CD8-positive, alpha-beta T cell (primary cell): ENCODE measurements at regions of chr2 and their contacts with region 1.

Region 1: DNA sequence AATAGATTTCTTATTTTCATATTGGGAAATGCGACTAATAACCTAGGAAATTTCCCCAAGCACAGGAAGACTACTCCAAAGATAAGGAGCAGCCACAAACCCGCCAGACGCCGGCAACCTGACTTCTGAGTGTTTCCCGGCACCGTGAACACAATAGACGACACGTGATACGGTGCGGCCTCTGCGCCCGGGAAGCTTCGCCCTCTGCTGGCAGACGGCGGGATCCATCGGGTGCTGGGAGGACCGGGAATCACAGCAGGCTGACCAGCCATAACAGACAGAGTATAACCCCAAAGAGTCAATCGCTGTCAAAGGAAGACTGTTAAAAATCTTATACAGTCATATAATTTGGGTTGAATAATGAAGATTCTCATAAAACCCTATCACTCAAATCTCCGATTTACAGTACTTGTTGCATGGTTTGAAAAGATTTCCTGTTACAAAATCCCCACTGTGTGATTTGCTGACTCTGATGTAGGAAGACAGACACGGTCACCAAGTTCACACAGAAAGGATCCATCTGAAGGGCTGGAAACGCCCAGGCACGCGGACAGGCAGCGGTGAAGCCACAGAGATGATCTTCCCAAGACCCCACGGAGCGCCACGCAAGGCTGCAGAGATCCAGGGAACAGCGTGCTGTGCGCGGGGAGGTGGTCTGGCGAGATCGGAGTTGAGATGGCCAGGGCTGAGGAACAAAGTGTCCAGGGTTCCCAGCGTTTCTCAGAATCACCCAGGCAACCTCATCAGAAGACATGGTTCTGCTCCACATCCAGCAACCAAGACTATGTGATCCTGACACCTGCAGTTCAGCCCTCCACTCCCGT is 73.8 kb downstream of the EIPR1 start:
- DNase-seq: peak; percentile 49 to 85 (median 74)
- ATAC-seq: peak; percentile 95
- H3K4me3 ChIP-seq: no peak overlapping the region
- H3K4me3 Mint-ChIP-seq: no peak overlapping the region
- H3K27ac ChIP-seq: no peak overlapping the region
- H3K27ac Mint-ChIP-seq: peak overlapping the region; percentile 85
- H3K4me1 ChIP-seq: peaks cover 8% of the 10 kb centered on the region
- H3K4me1 Mint-ChIP-seq: peaks cover 14% of the 10 kb centered on the region
- H3K27me3 ChIP-seq: no peaks in the 10 kb centered on the region
- H3K27me3 Mint-ChIP-seq: no peaks in the 10 kb centered on the region
- CTCF ChIP-seq: peak; percentile 95

Region 2: GRCh38 chr2:2121887-2122286 is 1181.9 kb before region 1 on chr2:
- CTCF ChIA-PET with region 1: no interaction called
- POLR2A ChIA-PET with region 1: no interaction called
- intact Hi-C with region 1: loop called in 1 of 2 experiments (anchors 2 kb)
- DNase-seq: no peak
- ATAC-seq: no peak
- H3K4me3 ChIP-seq: no peak overlapping the region
- H3K4me3 Mint-ChIP-seq: no peak overlapping the region
- H3K27ac ChIP-seq: no peak overlapping the region
- H3K27ac Mint-ChIP-seq: no peak overlapping the region
- H3K4me1 ChIP-seq: no peaks in the 10 kb centered on the region
- H3K4me1 Mint-ChIP-seq: no peaks in the 10 kb centered on the region
- H3K27me3 ChIP-seq: no peaks in the 10 kb centered on the region
- H3K27me3 Mint-ChIP-seq: peaks cover 7% of the 10 kb centered on the region
- CTCF ChIP-seq: no peak

Region 3: GRCh38 chr2:3001615-3002560 is 301.9 kb before region 1 on chr2:
- CTCF ChIA-PET with region 1: interaction called, 3 read pairs
- POLR2A ChIA-PET with region 1: no interaction called
- intact Hi-C with region 1: loop called (anchors 2 to 5 kb)
- DNase-seq: peak in 1 of 9 experiments; percentile 16
- ATAC-seq: no peak
- H3K4me3 ChIP-seq: no peak overlapping the region
- H3K4me3 Mint-ChIP-seq: no peak overlapping the region
- H3K27ac ChIP-seq: no peak overlapping the region
- H3K27ac Mint-ChIP-seq: no peak overlapping the region
- H3K4me1 ChIP-seq: no peaks in the 10 kb centered on the region
- H3K4me1 Mint-ChIP-seq: peaks cover 2% of the 10 kb centered on the region
- H3K27me3 ChIP-seq: peaks cover 0 to 4% of the 10 kb centered on the region in 2 experiments
- H3K27me3 Mint-ChIP-seq: peaks cover 24% of the 10 kb centered on the region
- CTCF ChIP-seq: no peak

Region 4: GRCh38 chr2:3179208-3179607 is 124.6 kb before region 1 on chr2:
- CTCF ChIA-PET with region 1: interaction called, 3 read pairs
- POLR2A ChIA-PET with region 1: no interaction called
- intact Hi-C with region 1: loop called (anchors 2 to 5 kb)
- DNase-seq: peak in 1 of 9 experiments; percentile 18
- ATAC-seq: no peak
- H3K4me3 ChIP-seq: no peak overlapping the region
- H3K4me3 Mint-ChIP-seq: no peak overlapping the region
- H3K27ac ChIP-seq: no peak overlapping the region
- H3K27ac Mint-ChIP-seq: no peak overlapping the region
- H3K4me1 ChIP-seq: no peaks in the 10 kb centered on the region
- H3K4me1 Mint-ChIP-seq: no peaks in the 10 kb centered on the region
- H3K27me3 ChIP-seq: no peaks in the 10 kb centered on the region
- H3K27me3 Mint-ChIP-seq: no peaks in the 10 kb centered on the region
- CTCF ChIP-seq: no peak

Region 5: GRCh38 chr2:3242747-3243369 is 60.9 kb before region 1 on chr2:
- CTCF ChIA-PET with region 1: no interaction called
- POLR2A ChIA-PET with region 1: no interaction called
- intact Hi-C with region 1: loop called in 1 of 2 experiments (anchors 5 kb)
- DNase-seq: peak in 8 of 9 experiments; percentile 19 to 85 (median 48)
- ATAC-seq: peak; percentile 78
- H3K4me3 ChIP-seq: peak overlapping the region in 1 of 2 experiments; percentile 18
- H3K4me3 Mint-ChIP-seq: peak overlapping the region; percentile 55
- H3K27ac ChIP-seq: peak overlapping the region; percentile 27 to 59
- H3K27ac Mint-ChIP-seq: peak overlapping the region; percentile 72
- H3K4me1 ChIP-seq: peaks cover 51% of the 10 kb centered on the region
- H3K4me1 Mint-ChIP-seq: peaks cover 23% of the 10 kb centered on the region
- H3K27me3 ChIP-seq: no peaks in the 10 kb centered on the region
- H3K27me3 Mint-ChIP-seq: no peaks in the 10 kb centered on the region
- CTCF ChIP-seq: no peak